ENCODE measurements at regions of chr9 and their contacts with region 1.

Region 1: GRCh38 chr9:136544964-136545692 is 720 bp downstream of the NOTCH1 start:
- DNase-seq: no peak

Region 2: DNA sequence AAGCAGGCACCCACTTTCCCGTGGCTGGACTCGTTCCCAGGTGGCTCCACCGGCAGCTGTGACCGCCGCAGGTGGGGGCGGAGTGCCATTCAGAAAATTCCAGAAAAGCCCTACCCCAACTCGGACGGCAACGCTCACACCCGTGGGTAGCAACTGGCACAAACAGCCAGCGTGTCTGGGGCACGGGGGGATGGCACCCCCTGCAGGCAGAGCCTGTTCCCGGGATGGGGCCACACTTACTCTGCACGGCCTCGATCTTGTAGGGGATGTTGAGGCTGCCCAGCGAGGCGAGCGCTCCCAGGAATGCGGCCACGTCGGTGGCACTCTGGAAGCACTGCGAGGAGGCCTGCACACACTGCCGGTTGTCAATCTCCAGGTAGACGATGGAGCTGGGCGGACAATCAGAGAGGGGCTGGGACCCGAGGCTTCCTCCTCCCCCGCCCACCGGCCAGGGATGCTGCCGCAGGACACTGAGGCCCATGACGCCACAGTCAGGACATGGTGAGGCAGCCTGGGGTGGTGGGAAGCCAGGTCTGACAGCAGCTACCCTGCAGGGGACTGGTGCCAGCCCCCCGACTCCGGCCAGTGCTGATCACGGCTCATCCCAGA is 42.1 kb before region 1 on chr9:
- intact Hi-C with region 1: loop called in 1 of 2 experiments (anchors 1 kb)
- DNase-seq: no peak

Region 3: DNA sequence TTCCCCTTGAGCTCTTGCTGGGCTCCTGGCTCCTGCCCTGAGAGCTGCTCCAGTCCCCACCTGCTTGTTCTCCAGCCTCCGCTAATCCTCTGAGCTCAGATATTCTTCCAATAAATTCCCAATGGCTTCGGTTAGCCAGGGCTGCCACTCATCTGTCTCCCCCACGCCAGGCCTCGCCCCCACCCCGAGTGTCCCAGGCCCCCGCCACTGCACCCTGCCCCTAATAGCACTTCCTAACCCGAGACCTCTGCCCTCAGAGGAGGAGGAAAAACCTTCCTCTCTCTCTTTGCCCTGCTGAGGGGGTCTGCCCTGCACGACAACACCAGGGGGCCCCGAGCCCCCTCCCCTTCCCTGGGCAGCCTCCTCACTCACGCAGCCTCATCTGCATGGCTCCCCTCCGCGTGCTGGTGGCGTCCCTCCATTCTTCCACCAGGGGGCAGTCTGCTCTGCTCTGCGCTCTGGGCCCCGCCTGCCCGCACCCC is 224.6 kb after region 1 on chr9:
- intact Hi-C with region 1: no loop called
- DNase-seq: peak; percentile 76

Region 4: GRCh38 chr9:137055385-137056364 is 510.5 kb after region 1 on chr9:
- intact Hi-C with region 1: no loop called
- DNase-seq: peak; percentile 92